Psoas muscle (tissue), 8 donors: ENCODE measurements at regions of chr2 and their contacts with region 1.

Region 1: GRCh38 chr2:160493227-160494028 is at the start of gene RBMS1:
- DNase-seq: peak; percentile 57 to 75
- ATAC-seq: peak; percentile 61 to 72 (median 67)
- H3K4me3 ChIP-seq: peak within 1 kb of the TSS; percentile 87
- H3K27ac ChIP-seq: peak within 1 kb of the TSS; percentile 94
- H3K4me1 ChIP-seq: peaks cover 14% of the 10 kb centered on the region
- H3K27me3 ChIP-seq: no peaks in the 10 kb centered on the region
- CTCF ChIP-seq: no peak
- total RNA-seq, gene RBMS1: 23.1 to 36.4 (median 24.9) TPM

Region 2: DNA sequence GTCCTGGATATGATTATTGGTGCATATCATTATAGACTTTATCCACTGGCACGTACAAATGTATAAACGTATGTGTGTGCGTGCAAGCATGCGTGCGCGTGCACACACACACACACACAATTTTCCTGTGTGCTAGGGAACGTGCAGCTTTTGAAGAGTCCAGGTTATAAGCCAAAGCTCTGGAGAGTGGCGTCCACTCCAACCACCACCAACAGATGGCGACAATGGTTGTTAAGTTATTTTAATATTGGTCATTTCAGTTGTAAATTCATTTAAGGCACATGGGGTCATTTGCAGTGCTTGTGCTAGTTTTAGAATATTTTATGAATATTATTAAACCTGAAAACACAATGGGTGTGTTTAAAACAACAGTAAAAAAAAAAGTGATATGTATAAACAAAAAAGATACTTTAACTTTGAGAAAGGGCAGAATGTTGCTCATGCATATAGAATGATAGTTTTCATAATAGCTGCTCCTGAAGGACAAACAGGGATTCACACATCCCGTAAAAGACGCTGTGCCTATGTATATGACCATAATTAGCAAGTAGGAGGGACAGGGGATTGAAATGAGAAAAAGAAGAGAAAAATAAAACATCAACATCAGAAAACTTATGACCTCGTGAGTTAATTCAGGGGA is 169.1 kb before region 1 on chr2:
- intact Hi-C with region 1: loop called in 1 of 2 experiments (anchors 10 kb)
- DNase-seq: peak; percentile 50 to 64
- ATAC-seq: peak; percentile 51 to 80 (median 70)
- H3K4me3 ChIP-seq: no peak overlapping the region
- H3K27ac ChIP-seq: peak overlapping the region; percentile 9
- H3K4me1 ChIP-seq: peaks cover 46% of the 10 kb centered on the region
- H3K27me3 ChIP-seq: no peaks in the 10 kb centered on the region
- CTCF ChIP-seq: peak; percentile 77

Region 3: DNA sequence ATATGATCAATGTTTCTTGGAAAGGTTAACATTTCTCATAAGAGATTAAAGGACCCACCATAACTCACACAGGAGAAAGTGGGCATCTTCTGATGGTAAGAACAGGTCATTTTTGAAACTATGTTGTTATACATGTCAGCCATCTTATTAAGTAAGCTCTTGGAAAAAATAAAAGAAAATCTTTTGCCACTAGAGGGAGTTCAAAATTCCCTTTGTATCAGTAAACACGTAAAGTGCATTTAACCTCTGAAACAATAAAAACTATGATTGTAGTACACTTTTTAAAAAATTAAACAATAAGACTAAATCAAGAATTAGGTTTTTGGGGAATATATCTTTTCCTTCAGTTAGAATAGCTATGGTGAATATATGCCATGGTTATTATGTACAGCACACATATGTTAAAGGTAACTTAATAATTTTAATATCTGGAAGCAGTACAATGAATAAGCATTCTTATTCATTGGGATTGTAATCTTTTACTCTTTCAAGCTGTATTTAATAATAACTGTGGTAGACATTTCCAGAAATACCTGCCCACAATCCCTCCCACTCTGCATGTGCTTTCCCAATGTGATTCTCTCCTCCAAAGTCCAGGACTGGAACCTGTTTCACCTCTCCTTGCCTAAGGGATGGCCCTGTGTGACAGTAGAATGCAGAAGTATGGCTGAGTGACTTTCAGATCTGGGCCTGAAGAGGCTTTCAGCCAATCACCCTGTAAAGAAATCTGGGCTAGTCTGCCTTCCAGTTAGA is 64.0 kb before region 1 on chr2:
- intact Hi-C with region 1: loop called in 1 of 2 experiments (anchors 5 kb)
- DNase-seq: no peak
- ATAC-seq: peak in 3 of 4 donors; percentile 31 to 66 (median 35)
- H3K4me3 ChIP-seq: no peak overlapping the region
- H3K27ac ChIP-seq: peak overlapping the region; percentile 61
- H3K4me1 ChIP-seq: peaks cover 38% of the 10 kb centered on the region
- H3K27me3 ChIP-seq: no peaks in the 10 kb centered on the region
- CTCF ChIP-seq: peak; percentile 65